ENCODE measurements at regions of chr20 and their contacts with region 1.

Region 1: GRCh38 chr20:35269055-35269781 is 8.7 kb downstream of the MMP24OS start:
- DNase-seq: peak in 8 of 9 experiments; percentile 16 to 69 (median 56)
- ATAC-seq: peak; percentile 79
- H3K4me3 ChIP-seq: no peak overlapping the region
- H3K4me3 Mint-ChIP-seq: no peak overlapping the region
- H3K27ac ChIP-seq: no peak overlapping the region
- H3K27ac Mint-ChIP-seq: no peak overlapping the region
- H3K4me1 ChIP-seq: no peaks in the 10 kb centered on the region
- H3K4me1 Mint-ChIP-seq: peaks cover 9% of the 10 kb centered on the region
- H3K27me3 ChIP-seq: no peaks in the 10 kb centered on the region
- H3K27me3 Mint-ChIP-seq: no peaks in the 10 kb centered on the region
- CTCF ChIP-seq: peak; percentile 60

Region 2: GRCh38 chr20:35207950-35208611 is 61.1 kb before region 1 on chr20:
- CTCF ChIA-PET with region 1: interaction called, 5 read pairs
- POLR2A ChIA-PET with region 1: no interaction called
- intact Hi-C with region 1: loop called in 1 of 2 experiments (anchors 1 kb)
- DNase-seq: peak; percentile 54 to 87 (median 82)
- ATAC-seq: peak; percentile 86
- H3K4me3 ChIP-seq: no peak overlapping the region
- H3K4me3 Mint-ChIP-seq: no peak overlapping the region
- H3K27ac ChIP-seq: no peak overlapping the region
- H3K27ac Mint-ChIP-seq: no peak overlapping the region
- H3K4me1 ChIP-seq: no peaks in the 10 kb centered on the region
- H3K4me1 Mint-ChIP-seq: no peaks in the 10 kb centered on the region
- H3K27me3 ChIP-seq: no peaks in the 10 kb centered on the region
- H3K27me3 Mint-ChIP-seq: no peaks in the 10 kb centered on the region
- CTCF ChIP-seq: peak; percentile 77

Region 3: GRCh38 chr20:35232575-35232974 is 36.6 kb before region 1 on chr20:
- CTCF ChIA-PET with region 1: interaction called, 3 read pairs
- POLR2A ChIA-PET with region 1: no interaction called
- intact Hi-C with region 1: loop called in 1 of 2 experiments (anchors 5 kb)
- DNase-seq: no peak
- ATAC-seq: no peak
- H3K4me3 ChIP-seq: no peak overlapping the region
- H3K4me3 Mint-ChIP-seq: no peak overlapping the region
- H3K27ac ChIP-seq: no peak overlapping the region
- H3K27ac Mint-ChIP-seq: no peak overlapping the region
- H3K4me1 ChIP-seq: no peaks in the 10 kb centered on the region
- H3K4me1 Mint-ChIP-seq: peaks cover 2% of the 10 kb centered on the region
- H3K27me3 ChIP-seq: peaks cover 0 to under 1% of the 10 kb centered on the region in 2 experiments
- H3K27me3 Mint-ChIP-seq: peaks cover 30% of the 10 kb centered on the region
- CTCF ChIP-seq: no peak